AG04449 (cell line): ENCODE measurements at regions of chr11 and their contacts with region 1.

Region 1: GRCh38 chr11:10623797-10624761 is 55.6 kb upstream of the LYVE1 start:
- DNase-seq: no peak
- H3K4me3 ChIP-seq: no peak overlapping the region
- CTCF ChIP-seq: peak; percentile 52

Region 2: GRCh38 chr11:10599388-10600175 is 24.5 kb before region 1 on chr11:
- CTCF ChIA-PET with region 1: no interaction called
- POLR2A ChIA-PET with region 1: no interaction called
- DNase-seq: no peak
- H3K4me3 ChIP-seq: no peak overlapping the region
- CTCF ChIP-seq: no peak

Region 3: GRCh38 chr11:10641177-10641911 is 17.3 kb after region 1 on chr11:
- CTCF ChIA-PET with region 1: interaction called, 15 read pairs
- POLR2A ChIA-PET with region 1: no interaction called
- DNase-seq: no peak
- H3K4me3 ChIP-seq: no peak overlapping the region
- CTCF ChIP-seq: no peak

Region 4: DNA sequence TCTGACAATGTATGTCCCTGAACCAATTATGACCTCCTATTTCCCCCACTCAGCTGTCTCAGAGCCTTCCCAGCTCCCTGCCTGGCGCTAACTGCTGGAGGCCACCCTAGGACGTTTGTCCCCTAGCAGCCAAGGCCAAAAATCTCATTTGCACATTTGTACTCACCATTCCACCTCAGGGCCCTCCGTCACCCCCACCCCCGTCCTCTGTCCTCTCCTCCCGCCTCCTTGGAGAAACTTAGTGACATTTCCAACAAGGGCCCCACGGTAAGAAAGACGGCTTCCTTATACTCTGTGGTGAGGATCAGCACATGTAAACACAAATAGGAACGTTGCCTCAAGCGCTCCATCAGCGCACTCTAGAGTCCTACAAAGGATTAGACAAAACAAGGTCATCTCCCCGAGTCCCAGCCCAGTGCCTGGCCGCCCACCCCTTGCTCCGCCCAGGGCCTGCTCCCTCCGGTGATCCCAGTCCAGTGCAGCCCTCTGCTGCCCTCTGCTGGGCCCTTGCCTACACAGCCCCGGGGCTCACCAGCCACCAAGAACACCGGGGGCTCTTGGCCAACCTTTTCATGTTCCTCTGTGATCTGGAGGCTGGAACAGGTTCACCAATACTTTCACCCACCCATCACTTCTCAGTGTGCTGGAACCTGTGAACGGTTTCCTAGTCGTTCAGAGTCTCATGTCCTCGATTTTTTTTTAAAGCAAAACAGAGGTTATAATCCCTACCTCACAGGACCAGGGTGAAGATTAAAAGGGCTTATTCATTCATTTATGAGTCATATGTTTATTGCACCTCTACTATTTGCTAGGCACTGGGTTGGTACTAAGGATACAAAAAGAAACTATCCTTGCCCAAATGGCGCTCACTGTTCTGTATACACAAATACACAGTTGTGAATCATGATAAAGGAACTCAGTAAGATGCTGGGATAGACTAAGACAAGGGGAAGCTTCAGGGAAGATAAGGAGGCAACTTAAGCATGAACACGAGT is 111.7 kb after region 1 on chr11:
- CTCF ChIA-PET with region 1: interaction called, 38 read pairs
- POLR2A ChIA-PET with region 1: no interaction called
- DNase-seq: peak; percentile 87
- H3K4me3 ChIP-seq: peak overlapping the region; percentile 50
- CTCF ChIP-seq: peak; percentile 94